Panc1 (cell line): ENCODE measurements at regions of chr4 and their contacts with region 1.

Region 1: DNA sequence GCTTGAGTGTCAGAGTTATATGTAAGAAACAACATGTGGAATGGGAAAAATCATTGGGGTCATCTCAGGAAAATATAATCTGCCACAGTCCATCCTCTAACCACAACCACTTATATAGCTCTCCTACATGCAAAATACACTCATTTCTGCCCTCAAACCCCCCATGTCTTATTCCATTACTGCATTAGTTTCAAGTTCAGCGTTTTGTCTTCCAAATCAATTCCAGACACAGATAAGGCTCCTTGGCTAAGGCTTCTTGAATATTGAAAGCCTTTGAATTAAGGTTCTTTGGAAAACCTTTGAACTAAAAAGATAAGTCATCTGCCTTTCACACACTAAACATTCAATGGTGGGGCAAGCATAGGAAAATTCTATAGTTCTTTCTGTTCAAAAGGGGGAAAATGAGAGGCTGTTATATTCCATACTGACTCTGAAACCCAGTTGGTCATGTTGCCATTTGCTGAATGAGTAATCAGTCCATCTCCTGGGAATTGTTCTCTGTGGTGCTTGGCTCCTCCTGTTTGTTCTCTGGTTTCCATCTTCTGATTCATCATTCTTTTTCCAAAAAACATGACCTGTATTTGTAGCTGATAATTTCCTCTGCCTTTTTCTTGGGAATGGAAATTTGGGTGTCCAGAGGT is 218.7 kb downstream of the BMPR1B start:
- DNase-seq: no peak
- ATAC-seq: no peak
- H3K4me3 ChIP-seq: no peak overlapping the region
- H3K27ac ChIP-seq: no peak overlapping the region
- H3K4me1 ChIP-seq: no peaks in the 10 kb centered on the region
- H3K27me3 ChIP-seq: no peaks in the 10 kb centered on the region
- CTCF ChIP-seq: no peak

Region 2: DNA sequence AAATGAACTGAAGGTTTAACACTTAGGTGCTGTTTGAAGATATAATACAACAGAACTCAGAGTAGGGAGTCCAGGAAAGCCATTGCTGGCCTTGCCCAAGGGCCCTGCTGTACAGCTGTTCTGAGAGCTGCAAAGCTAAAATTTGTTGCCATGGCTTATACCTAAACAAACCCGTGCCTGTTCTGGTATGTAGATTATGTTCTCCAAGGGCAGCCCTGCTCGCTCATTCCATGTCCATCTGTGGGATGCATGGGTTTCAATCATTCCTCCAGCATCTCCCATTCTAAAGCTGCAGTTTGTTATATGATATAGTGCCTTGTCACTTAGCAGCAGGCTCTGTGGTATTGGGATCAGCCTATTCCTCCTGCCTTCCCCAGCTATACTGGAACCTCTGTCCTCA is 299.5 kb before region 1 on chr4:
- CTCF ChIA-PET with region 1: no interaction called
- POLR2A ChIA-PET with region 1: no interaction called
- in situ Hi-C with region 1: no loop called
- intact Hi-C with region 1: loop called (anchors 10 kb)
- DNase-seq: no peak
- ATAC-seq: no peak
- H3K4me3 ChIP-seq: no peak overlapping the region
- H3K27ac ChIP-seq: no peak overlapping the region
- H3K4me1 ChIP-seq: no peaks in the 10 kb centered on the region
- H3K27me3 ChIP-seq: no peaks in the 10 kb centered on the region
- CTCF ChIP-seq: no peak

Region 3: DNA sequence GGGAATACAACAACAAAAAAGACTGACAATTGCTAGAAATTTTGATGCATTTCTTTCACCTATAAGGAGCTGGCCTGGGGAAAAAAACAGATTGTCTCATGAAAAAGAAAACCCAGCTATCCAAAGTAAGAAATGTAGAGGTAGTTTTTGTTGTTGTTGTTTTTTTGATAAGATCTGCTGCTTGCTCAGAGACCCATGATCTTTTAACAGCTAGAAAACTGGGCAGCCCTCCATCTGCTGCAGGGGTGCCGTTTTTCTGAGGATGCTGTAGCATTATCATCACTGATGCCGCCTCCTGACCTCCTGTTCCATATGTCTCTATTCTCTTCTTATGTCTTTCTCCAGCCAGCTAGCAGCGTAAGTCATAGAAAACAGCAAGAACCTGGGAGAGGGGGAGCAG is 120.5 kb before region 1 on chr4:
- CTCF ChIA-PET with region 1: no interaction called
- POLR2A ChIA-PET with region 1: no interaction called
- in situ Hi-C with region 1: no loop called
- intact Hi-C with region 1: no loop called
- DNase-seq: no peak
- ATAC-seq: no peak
- H3K4me3 ChIP-seq: no peak overlapping the region
- H3K27ac ChIP-seq: no peak overlapping the region
- H3K4me1 ChIP-seq: no peaks in the 10 kb centered on the region
- H3K27me3 ChIP-seq: no peaks in the 10 kb centered on the region
- CTCF ChIP-seq: no peak